Activated naive CD8-positive, alpha-beta T cell treated with anti-CD3 and anti-CD28 coated beads, Interleukin-2, amount 10 ng/mL, durations not matched to agents 7 days and 5 days (primary cell): ENCODE measurements at regions of chr14 and their contacts with region 1.

Region 1: DNA sequence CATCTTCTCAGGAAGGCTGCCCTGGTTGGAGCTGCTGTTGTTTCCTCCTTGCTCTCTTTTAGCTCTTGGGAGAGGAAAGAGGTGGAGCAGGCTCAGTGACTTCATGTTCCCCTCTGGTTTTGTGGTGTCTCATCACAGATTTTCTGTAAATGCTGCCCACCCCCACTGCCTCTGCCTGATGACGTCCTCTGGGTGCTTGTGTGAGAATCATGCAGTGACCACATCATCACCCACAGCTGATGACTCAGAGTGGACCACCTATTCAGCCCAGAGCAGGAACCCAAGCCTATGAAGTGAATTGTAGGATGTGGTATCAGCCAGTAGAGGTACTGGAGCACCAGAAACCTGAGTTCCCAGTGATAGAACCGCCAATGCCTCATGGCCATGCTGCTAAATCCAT is at the start of gene GZMB:
- DNase-seq: peak; percentile 72
- ATAC-seq: peak; percentile 94
- H3K4me3 Mint-ChIP-seq: peak within 1 kb of the TSS; percentile 91
- H3K27ac Mint-ChIP-seq: peak within 1 kb of the TSS; percentile 94
- H3K4me1 Mint-ChIP-seq: peaks cover 58% of the 10 kb centered on the region
- H3K27me3 Mint-ChIP-seq: no peaks in the 10 kb centered on the region
- total RNA-seq, gene GZMB: 195 to 217 TPM

Region 2: GRCh38 chr14:24578558-24578957 is 55.6 kb before region 1 on chr14:
- POLR2A ChIA-PET with region 1: no interaction called
- DNase-seq: no peak
- ATAC-seq: no peak
- H3K4me3 Mint-ChIP-seq: no peak overlapping the region
- H3K27ac Mint-ChIP-seq: no peak overlapping the region
- H3K4me1 Mint-ChIP-seq: peaks cover 7% of the 10 kb centered on the region
- H3K27me3 Mint-ChIP-seq: peaks cover 9% of the 10 kb centered on the region

Region 3: GRCh38 chr14:24605435-24606190 is 28.5 kb before region 1 on chr14:
- POLR2A ChIA-PET with region 1: interaction called, 20 read pairs
- DNase-seq: peak; percentile 78
- ATAC-seq: peak; percentile 80
- H3K4me3 Mint-ChIP-seq: peak overlapping the region; percentile 81
- H3K27ac Mint-ChIP-seq: peak overlapping the region; percentile 97
- H3K4me1 Mint-ChIP-seq: peaks cover 54% of the 10 kb centered on the region
- H3K27me3 Mint-ChIP-seq: no peaks in the 10 kb centered on the region

Region 4: DNA sequence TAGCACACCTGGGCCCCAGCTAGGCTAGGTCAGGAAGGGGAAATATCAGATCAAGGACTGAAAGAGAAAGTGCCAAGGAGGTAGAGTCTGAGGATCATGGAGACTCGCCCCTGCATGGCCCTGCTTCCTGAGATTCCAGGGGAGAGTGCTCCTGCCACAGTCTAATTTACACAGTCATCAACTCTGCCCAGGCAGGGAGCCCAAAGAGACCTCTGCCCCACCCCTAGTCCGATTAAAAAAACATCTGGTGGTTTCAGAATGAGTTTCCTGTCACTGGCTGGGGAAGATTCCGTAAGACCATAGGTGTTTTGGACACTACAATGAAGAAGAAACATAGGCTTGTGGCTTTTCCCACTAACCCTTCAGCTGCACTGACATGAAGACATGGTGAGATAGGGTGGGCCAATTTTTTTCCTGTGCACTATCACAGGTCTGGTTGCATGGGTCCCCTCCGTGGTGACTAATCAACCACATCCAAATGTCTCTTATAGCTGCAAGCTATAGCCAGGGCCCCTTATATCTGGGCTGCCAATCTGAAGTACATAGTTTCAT is 31.4 kb after region 1 on chr14:
- POLR2A ChIA-PET with region 1: interaction called, 20 read pairs
- DNase-seq: peak; percentile 64
- ATAC-seq: peak; percentile 83
- H3K4me3 Mint-ChIP-seq: peak overlapping the region; percentile 63
- H3K27ac Mint-ChIP-seq: peak overlapping the region; percentile 86
- H3K4me1 Mint-ChIP-seq: peaks cover 78% of the 10 kb centered on the region
- H3K27me3 Mint-ChIP-seq: no peaks in the 10 kb centered on the region

Region 5: DNA sequence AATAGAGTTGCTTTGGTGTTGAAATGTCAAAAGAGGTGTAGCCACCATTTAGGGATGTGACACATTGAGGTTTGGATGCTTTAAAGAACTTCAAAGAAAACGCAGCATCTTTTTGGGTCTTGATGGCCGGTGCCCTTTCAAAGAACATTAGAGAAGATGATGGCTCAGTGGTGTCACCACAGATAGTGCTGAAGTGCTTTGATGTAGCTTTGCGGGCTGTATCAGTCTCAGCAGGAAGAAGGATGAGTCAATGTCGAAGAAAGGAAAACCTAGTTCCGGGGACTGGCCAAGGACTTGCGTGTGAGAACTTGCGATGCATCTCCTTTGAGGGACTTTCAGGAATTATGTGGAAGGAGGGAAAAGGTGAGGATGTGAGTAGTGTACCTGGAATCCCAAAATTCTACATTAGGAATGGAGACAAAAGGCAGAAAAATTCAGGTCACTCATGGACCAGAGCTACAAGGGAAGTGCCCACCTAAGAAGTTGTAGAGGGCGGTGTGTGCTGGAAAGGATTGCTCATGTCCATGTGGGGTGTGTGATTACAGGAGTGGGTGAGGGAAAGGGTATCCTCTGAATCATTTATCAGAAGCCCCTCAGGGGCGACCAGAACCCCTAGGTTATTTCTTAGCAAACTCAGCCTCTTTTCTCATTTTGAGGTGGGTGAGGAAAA is 39.5 kb after region 1 on chr14:
- POLR2A ChIA-PET with region 1: interaction called, 41 read pairs
- DNase-seq: peak; percentile 56
- ATAC-seq: peak; percentile 75
- H3K4me3 Mint-ChIP-seq: peak overlapping the region; percentile 81
- H3K27ac Mint-ChIP-seq: peak overlapping the region; percentile 100
- H3K4me1 Mint-ChIP-seq: peaks cover 68% of the 10 kb centered on the region
- H3K27me3 Mint-ChIP-seq: no peaks in the 10 kb centered on the region